ENCODE measurements at regions of chr1 and their contacts with region 1.

Region 1: DNA sequence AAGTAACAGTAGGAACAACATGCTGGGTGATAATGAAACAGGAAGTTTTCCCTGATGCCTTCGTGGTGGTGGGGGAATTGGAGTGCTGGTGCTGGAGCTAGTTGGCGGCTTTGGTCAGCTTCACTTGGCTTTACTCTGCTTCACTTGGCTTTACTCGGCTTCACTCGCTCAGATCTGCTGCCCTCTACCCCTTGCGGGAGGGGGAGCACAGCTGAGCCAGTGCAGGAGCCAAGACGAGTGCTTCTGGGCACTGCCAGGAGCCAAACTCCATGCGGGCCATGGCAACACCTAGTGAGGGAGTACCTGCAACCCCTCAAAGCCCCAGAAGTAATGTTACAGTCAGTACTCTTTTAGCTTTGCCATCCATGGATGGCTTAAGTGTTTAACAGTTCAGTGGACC is 10.6 kb upstream of the PRKACB start:
- DNase-seq: no peak
- H3K4me3 ChIP-seq: no peak overlapping the region
- H3K27ac ChIP-seq: no peak overlapping the region
- H3K4me1 ChIP-seq: no peaks in the 10 kb centered on the region
- H3K27me3 ChIP-seq: no peaks in the 10 kb centered on the region
- CTCF ChIP-seq: no peak
- EP300 ChIP-seq: no peak
- POLR2A ChIP-seq: no peak
- RAD21 ChIP-seq: peak in 1 of 2 experiments; percentile 14; a peak in 1 of 4 replicates

Region 2: GRCh38 chr1:84107955-84108354 is 25.5 kb before region 1 on chr1:
- CTCF ChIA-PET with region 1: no interaction called
- POLR2A ChIA-PET with region 1: no interaction called
- DNase-seq: no peak
- H3K4me3 ChIP-seq: no peak overlapping the region
- H3K27ac ChIP-seq: no peak overlapping the region
- H3K4me1 ChIP-seq: peaks cover 0 to 7% (median 3%) of the 10 kb centered on the region in 4 experiments; a peak in 2 of 7 replicates
- H3K27me3 ChIP-seq: no peaks in the 10 kb centered on the region
- CTCF ChIP-seq: no peak
- EP300 ChIP-seq: no peak
- POLR2A ChIP-seq: no peak
- RAD21 ChIP-seq: no peak

Region 3: DNA sequence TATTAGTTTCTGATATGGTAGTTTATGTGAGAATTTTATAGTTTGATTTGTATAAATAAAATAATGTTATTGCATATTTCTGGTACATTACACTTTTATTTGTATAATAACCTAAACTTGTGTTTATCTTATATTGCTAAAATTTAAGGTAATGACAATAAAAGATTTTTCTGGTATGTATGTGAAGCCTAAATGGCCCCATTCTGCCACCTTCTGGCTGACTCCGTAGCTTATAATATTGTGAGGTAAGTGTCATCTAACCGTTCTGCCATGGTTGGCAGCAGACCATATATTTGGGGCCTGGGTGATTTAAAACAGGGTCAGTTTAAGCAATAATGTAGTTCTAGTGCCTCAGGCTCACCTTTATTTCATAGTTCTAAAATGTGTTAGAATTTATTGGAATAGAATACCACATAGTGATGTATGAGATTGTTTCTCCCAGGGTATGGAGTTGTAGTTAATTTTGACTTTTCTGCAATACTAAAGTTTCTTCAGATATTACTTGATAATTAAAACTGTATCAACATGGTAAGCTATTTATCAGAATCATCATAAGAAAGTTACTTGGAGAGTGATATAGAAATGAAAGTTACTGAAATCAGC is 10.6 kb before region 1 on chr1:
- CTCF ChIA-PET with region 1: interaction called, 14 read pairs
- POLR2A ChIA-PET with region 1: no interaction called
- DNase-seq: no peak
- H3K4me3 ChIP-seq: no peak overlapping the region
- H3K27ac ChIP-seq: no peak overlapping the region
- H3K4me1 ChIP-seq: no peaks in the 10 kb centered on the region
- H3K27me3 ChIP-seq: no peaks in the 10 kb centered on the region
- CTCF ChIP-seq: peak in 2 of 3 experiments; percentile 59 to 60; a peak in 3 of 4 replicates
- EP300 ChIP-seq: no peak
- POLR2A ChIP-seq: no peak
- RAD21 ChIP-seq: peak; percentile 76 to 79

Region 4: DNA sequence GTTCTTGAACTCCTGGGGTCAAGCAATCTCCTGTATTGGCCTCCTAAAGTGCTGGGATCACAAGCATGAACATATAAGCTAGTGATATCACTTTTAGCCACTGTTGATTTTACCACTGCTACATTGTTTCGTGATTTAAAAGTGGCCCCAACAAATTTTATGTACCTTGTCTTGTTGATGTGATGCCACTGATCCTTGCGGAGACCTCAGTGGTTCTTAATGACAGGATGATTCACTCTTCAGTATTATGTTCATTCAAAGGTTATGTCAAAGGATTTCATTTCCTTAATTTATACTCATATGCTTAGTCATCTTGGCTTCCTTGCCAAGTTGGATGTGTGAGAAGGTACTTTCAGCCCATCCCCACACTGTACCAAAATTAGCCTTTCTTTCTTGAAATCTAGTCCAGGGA is 22.7 kb after region 1 on chr1:
- CTCF ChIA-PET with region 1: no interaction called
- POLR2A ChIA-PET with region 1: no interaction called
- DNase-seq: no peak
- H3K4me3 ChIP-seq: no peak overlapping the region
- H3K27ac ChIP-seq: no peak overlapping the region
- H3K4me1 ChIP-seq: no peaks in the 10 kb centered on the region
- H3K27me3 ChIP-seq: no peaks in the 10 kb centered on the region
- CTCF ChIP-seq: no peak
- EP300 ChIP-seq: no peak
- POLR2A ChIP-seq: no peak
- RAD21 ChIP-seq: no peak

Measured in H1 (cell line).